Transverse colon (tissue), 4 donors: ENCODE measurements at regions of chr2 and their contacts with region 1.

Region 1: GRCh38 chr2:238484522-238485452 is 58.1 kb downstream of the ASB1 start:
- DNase-seq: no peak
- H3K4me3 ChIP-seq: no peak overlapping the region
- H3K27ac ChIP-seq: no peak overlapping the region
- H3K4me1 ChIP-seq: no peaks in the 10 kb centered on the region
- H3K27me3 ChIP-seq: no peaks in the 10 kb centered on the region
- CTCF ChIP-seq: no peak
- EP300 ChIP-seq: no peak
- POLR2A ChIP-seq: no peak

Region 2: DNA sequence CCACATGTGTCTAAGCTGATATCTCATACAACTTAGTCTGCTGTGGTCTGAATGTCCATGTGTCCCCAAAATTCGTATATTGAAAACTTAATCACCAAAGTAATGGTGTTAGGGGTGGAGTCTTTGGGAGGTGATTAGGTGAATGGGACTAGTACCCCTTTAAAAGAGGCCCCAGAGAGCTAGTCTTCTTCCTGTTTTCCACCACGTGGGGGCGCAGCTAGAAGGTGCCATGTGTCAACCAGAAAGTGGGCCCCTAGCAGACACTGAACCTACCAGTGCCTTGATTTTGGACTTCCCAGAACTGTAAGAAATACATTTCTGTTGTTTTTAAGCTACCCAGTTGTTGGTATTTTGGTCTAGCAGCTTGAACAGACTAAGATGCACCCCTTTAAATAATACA is 28.6 kb after region 1 on chr2:
- in situ Hi-C with region 1: no loop called
- intact Hi-C with region 1: no loop called
- DNase-seq: no peak
- H3K4me3 ChIP-seq: no peak overlapping the region
- H3K27ac ChIP-seq: no peak overlapping the region
- H3K4me1 ChIP-seq: no peaks in the 10 kb centered on the region
- H3K27me3 ChIP-seq: peaks cover 9% of the 10 kb centered on the region
- CTCF ChIP-seq: peak in 4 of 5 experiments; percentile 11 to 35 (median 26)
- EP300 ChIP-seq: no peak
- POLR2A ChIP-seq: no peak

Region 3: GRCh38 chr2:240089140-240089705 is 1604.4 kb after region 1 on chr2:
- in situ Hi-C with region 1: no loop called
- intact Hi-C with region 1: loop called (anchors 5 kb)
- DNase-seq: no peak
- H3K4me3 ChIP-seq: no peak overlapping the region
- H3K27ac ChIP-seq: no peak overlapping the region
- H3K4me1 ChIP-seq: no peaks in the 10 kb centered on the region
- H3K27me3 ChIP-seq: peaks cover 27% of the 10 kb centered on the region
- CTCF ChIP-seq: no peak
- EP300 ChIP-seq: no peak
- POLR2A ChIP-seq: no peak